WTC11 (cell line): ENCODE measurements at regions of chr12 and their contacts with region 1.

Region 1: DNA sequence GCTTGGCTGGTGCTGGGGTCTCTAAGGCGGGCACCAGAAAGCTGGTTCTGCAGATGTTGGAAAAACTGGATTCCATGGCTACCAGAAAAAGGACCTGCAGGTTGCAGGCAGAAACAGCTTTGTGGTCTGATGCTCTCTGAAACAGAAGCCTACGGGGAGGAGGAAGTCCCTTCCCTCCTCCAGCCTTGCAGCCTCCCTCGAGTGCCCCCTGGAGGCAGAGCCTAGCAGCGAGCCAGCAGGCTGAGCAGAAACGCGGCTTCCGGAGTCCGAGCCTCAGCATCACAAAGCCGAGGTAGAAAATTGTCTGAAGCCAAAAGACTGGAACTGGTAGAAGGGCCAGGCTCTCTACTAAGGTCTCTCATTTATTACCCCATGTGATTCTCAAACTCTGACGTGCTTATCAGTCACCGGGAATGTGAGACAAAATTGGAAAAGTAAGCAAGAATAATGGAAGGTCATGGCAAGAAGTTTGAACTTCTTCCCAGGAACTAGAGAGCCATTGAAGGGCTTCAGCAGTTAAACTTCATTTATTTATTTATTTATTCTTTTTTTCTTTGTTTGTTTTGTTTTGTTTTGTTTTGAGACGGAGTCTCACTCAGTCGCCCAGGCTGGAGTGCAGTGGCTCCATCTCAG is 82.2 kb upstream of the CPSF6 start:
- DNase-seq: peak; percentile 95
- ATAC-seq: peak; percentile 98
- H3K4me3 Mint-ChIP-seq: no peak overlapping the region
- H3K27ac Mint-ChIP-seq: no peak overlapping the region
- H3K4me1 Mint-ChIP-seq: peaks cover 15% of the 10 kb centered on the region
- H3K27me3 Mint-ChIP-seq: peaks cover 6% of the 10 kb centered on the region; the same call in 1 of the 2 replicates
- CTCF ChIP-seq: peak; percentile 82

Region 2: DNA sequence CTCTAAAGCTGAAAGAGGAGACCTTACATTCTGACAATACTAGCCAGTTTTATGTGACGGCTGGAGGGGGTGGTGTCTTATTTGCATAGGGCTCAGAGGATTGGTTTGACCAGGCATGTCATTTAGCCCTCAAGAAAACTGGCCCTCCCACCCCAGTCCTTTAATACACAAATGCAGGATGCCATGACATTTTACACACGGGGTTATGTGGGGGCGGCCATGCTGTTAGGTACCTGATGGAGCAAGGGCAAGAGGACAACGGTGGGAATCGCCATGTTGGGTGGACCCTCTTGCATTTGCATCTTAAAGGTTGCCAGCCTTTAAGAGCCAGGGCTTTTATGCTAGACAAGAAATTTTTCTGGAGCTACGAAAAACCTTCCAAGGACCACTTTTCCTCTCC is 325.9 kb before region 1 on chr12:
- CTCF ChIA-PET with region 1: interaction called, 11 read pairs
- POLR2A ChIA-PET with region 1: no interaction called
- DNase-seq: no peak
- ATAC-seq: peak; percentile 76
- H3K4me3 Mint-ChIP-seq: no peak overlapping the region
- H3K27ac Mint-ChIP-seq: peak overlapping the region; percentile 85
- H3K4me1 Mint-ChIP-seq: peaks cover 24% of the 10 kb centered on the region
- H3K27me3 Mint-ChIP-seq: no peaks in the 10 kb centered on the region
- CTCF ChIP-seq: no peak

Region 3: GRCh38 chr12:69173368-69173767 is 16.2 kb after region 1 on chr12:
- CTCF ChIA-PET with region 1: interaction called, 28 read pairs
- POLR2A ChIA-PET with region 1: interaction called, 8 read pairs
- DNase-seq: no peak
- ATAC-seq: no peak
- H3K4me3 Mint-ChIP-seq: no peak overlapping the region
- H3K27ac Mint-ChIP-seq: no peak overlapping the region
- H3K4me1 Mint-ChIP-seq: peaks cover 30% of the 10 kb centered on the region
- H3K27me3 Mint-ChIP-seq: no peaks in the 10 kb centered on the region; the same call in 1 of the 2 replicates
- CTCF ChIP-seq: no peak

Region 4: GRCh38 chr12:69254046-69254445 is 96.9 kb after region 1 on chr12:
- CTCF ChIA-PET with region 1: interaction called, 44 read pairs
- POLR2A ChIA-PET with region 1: no interaction called
- DNase-seq: no peak
- ATAC-seq: peak; percentile 50
- H3K4me3 Mint-ChIP-seq: no peak overlapping the region
- H3K27ac Mint-ChIP-seq: no peak overlapping the region; the same call in 1 of the 2 replicates
- H3K4me1 Mint-ChIP-seq: peaks cover 26% of the 10 kb centered on the region
- H3K27me3 Mint-ChIP-seq: no peaks in the 10 kb centered on the region
- CTCF ChIP-seq: peak; percentile 59

Region 5: GRCh38 chr12:69266036-69266635 is 109.0 kb after region 1 on chr12:
- CTCF ChIA-PET with region 1: interaction called, 15 read pairs
- POLR2A ChIA-PET with region 1: no interaction called
- DNase-seq: no peak
- ATAC-seq: no peak
- H3K4me3 Mint-ChIP-seq: no peak overlapping the region
- H3K27ac Mint-ChIP-seq: peak overlapping the region; percentile 63; the same call in 1 of the 2 replicates
- H3K4me1 Mint-ChIP-seq: no peaks in the 10 kb centered on the region
- H3K27me3 Mint-ChIP-seq: no peaks in the 10 kb centered on the region
- CTCF ChIP-seq: no peak